H1 (cell line): ENCODE measurements at regions of chr9 and their contacts with region 1.

Region 1: DNA sequence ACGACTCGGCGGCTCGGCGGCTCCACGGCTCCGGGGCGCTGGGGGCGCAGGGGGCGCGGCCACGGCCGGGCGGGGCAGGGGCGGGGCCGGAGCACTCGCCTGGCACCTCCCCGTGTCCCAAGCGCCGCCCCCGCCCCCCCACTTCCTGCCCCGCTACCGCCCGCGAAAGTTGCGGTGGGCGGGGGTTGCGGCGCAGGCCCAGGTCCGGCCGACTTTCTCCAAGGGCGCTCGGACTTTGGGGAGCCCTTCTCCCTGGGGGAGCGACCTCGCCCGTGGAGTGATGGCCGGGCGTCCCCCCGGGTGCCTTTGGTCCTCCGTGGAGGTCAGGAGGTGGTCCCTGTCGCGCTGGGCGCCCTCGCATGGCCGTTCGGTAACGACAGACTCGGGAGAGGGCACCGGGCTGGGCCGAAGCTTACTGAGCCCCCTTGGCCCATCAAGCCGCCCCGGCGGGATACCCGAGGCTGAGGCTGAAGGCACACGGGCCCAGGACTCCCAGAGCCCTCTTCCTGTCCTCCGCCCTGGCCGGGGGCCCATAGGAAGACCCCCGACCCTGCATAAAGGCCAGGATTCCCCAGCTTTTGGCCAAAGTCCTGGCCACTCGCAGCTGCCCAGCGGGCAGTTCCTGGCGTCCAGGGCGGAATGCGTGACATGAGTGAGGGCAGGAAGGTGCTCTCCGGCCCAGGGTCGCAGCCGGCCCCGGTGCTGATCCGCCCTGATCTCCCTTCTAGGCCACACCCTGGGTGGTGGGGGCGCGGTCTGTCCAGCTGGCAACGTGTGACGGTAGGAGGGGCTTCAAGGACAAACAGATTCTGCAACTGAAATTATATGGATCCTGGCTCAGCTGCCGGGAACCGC is 883 bp upstream of the VAV2 start:
- DNase-seq: peak; percentile 39 to 84
- H3K4me3 ChIP-seq: peak overlapping the region; percentile 40 to 93 (median 67)
- H3K27ac ChIP-seq: peak overlapping the region; percentile 54; the same call in 1 of the 2 replicates
- H3K4me1 ChIP-seq: peaks cover 0 to 20% (median 11%) of the 10 kb centered on the region in 4 experiments; a peak in 5 of 7 replicates
- H3K27me3 ChIP-seq: no peaks in the 10 kb centered on the region
- CTCF ChIP-seq: peak in 2 of 3 experiments; percentile 12 to 22; a peak in 2 of 4 replicates
- EP300 ChIP-seq: no peak
- POLR2A ChIP-seq: no peak
- RAD21 ChIP-seq: 0 out of 4 replicates have a peak, but pooled peaks of 1 of the 2 experiments have one; percentile 10

Region 2: GRCh38 chr9:133773889-133774655 is 218.9 kb before region 1 on chr9:
- CTCF ChIA-PET with region 1: interaction called, 30 read pairs
- POLR2A ChIA-PET with region 1: no interaction called
- DNase-seq: no peak
- H3K4me3 ChIP-seq: no peak overlapping the region
- H3K27ac ChIP-seq: no peak overlapping the region
- H3K4me1 ChIP-seq: no peaks in the 10 kb centered on the region
- H3K27me3 ChIP-seq: no peaks in the 10 kb centered on the region
- CTCF ChIP-seq: no peak
- EP300 ChIP-seq: no peak
- POLR2A ChIP-seq: no peak
- RAD21 ChIP-seq: no peak

Region 3: DNA sequence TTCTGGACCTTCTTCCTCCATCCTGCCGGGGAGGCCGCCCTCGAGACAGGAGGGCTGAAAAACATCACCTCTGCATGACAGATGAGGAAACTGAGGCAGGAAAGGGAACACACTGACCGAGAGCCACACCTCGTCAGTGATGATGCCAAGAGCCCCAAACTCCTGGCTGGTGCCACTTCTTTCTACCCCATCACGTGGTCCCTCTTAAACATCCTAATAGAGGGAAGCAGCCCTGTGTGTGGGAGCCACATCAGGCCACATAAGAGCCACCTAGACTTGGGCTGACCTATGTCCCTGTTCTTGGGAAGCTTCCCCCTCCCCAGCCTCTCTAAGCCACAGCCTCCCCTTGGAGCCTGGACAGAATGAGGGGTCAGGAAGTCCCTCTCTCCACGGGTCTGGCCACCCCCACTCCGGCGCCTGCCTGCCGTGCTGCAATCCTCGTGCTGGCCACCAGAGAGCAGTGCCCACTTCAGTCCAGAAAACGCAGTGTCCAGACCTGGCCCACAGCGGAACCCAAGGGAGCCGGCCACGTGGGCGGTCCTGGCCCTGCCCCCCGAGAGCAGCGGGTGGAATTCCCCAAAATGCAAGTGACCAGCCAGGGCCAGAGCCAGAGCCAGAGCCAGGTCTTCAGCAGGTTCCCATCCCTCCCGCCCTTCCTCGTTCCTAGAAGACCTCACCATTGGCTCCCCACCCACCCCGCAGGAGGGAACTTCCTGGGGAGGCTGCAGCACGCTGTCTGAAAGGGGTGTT is 200.1 kb before region 1 on chr9:
- CTCF ChIA-PET with region 1: interaction called, 42 read pairs
- POLR2A ChIA-PET with region 1: no interaction called
- DNase-seq: peak in 1 of 2 experiments; percentile 90
- H3K4me3 ChIP-seq: no peak overlapping the region
- H3K27ac ChIP-seq: no peak overlapping the region
- H3K4me1 ChIP-seq: peaks cover 0 to 9% (median 3%) of the 10 kb centered on the region in 4 experiments; a peak in 6 of 7 replicates
- H3K27me3 ChIP-seq: no peaks in the 10 kb centered on the region
- CTCF ChIP-seq: peak in 2 of 3 experiments; percentile 90 to 92; a peak in 3 of 4 replicates
- EP300 ChIP-seq: no peak
- POLR2A ChIP-seq: no peak
- RAD21 ChIP-seq: peak; percentile 88 to 91

Region 4: DNA sequence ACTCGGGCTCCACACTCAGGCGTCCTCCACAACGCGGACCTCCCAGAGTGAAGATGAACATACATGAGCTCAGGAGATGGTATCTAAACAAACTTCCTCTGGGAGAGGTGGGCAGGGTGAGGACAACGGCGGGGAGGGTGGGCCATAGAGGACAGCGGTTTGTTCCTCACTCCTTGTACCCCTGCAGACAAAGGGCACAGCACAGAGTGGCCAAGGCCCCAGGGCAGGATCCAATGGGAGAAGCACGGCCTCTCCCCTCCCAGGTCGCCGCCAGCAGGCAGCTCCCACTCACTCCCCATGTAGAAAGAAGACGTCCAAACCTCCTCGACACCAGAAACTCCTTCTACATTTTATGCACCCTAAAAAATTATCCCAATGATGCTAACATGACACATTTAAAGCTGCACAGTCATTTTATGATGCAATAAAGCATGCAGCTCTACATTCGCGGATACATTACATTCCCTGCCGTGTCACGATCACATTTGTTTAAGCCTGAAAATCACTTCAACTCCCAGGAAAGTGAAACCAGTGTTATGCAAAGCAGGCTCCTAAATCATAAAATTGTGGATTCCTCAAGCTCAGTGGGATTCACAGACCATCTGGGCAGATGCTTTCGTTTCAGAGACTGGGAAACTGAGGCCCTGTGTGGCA is 167.3 kb before region 1 on chr9:
- CTCF ChIA-PET with region 1: interaction called, 11 read pairs
- POLR2A ChIA-PET with region 1: no interaction called
- DNase-seq: no peak
- H3K4me3 ChIP-seq: no peak overlapping the region
- H3K27ac ChIP-seq: no peak overlapping the region
- H3K4me1 ChIP-seq: peaks cover 0 to 35% (median 29%) of the 10 kb centered on the region in 4 experiments; a peak in 6 of 7 replicates
- H3K27me3 ChIP-seq: no peaks in the 10 kb centered on the region
- CTCF ChIP-seq: no peak
- EP300 ChIP-seq: no peak
- POLR2A ChIP-seq: no peak
- RAD21 ChIP-seq: no peak

Region 5: DNA sequence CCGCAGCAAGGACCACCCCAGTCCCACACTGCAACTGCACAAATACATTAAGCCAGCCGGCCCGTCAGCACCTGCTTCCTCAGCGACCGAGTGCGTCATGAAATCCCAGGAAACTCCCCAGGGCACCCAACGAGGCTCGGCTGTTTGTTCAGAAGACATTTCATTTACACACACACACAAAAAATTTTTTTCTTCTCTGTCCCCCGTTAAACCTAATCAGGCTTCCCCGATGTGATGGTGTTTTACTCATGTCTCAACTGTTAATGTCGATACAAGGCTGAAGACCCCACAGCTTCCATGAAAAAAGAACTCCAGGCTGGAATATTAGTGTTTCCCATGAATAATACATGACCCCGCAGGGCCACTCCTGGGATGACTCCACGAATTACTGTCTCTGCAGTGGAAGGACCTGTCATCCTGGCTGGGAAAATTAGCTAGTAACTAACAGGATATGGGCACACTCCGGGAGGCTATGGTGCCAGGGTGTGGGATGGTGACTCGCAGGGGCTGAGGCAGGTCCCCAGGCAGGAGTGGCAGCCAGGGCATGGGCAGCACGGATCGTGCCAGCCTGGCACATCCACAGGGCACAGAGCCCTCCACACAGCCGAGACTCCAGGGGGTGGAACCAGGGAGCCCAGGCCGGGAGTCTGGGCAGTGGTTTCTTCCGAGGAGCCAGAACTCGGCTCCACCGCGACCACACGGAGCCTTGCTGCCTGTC is 103.3 kb before region 1 on chr9:
- CTCF ChIA-PET with region 1: interaction called, 20 read pairs
- POLR2A ChIA-PET with region 1: interaction called, 4 read pairs
- DNase-seq: peak in 1 of 2 experiments; percentile 43
- H3K4me3 ChIP-seq: no peak overlapping the region
- H3K27ac ChIP-seq: no peak overlapping the region
- H3K4me1 ChIP-seq: peaks cover 0 to 50% (median 22%) of the 10 kb centered on the region in 4 experiments; a peak in 6 of 7 replicates
- H3K27me3 ChIP-seq: no peaks in the 10 kb centered on the region
- CTCF ChIP-seq: no peak
- EP300 ChIP-seq: no peak
- POLR2A ChIP-seq: no peak
- RAD21 ChIP-seq: no peak

Region 6: GRCh38 chr9:133979273-133979920 is 13.6 kb before region 1 on chr9:
- CTCF ChIA-PET with region 1: interaction called, 22 read pairs
- POLR2A ChIA-PET with region 1: interaction called, 5 read pairs
- DNase-seq: peak in 1 of 2 experiments; percentile 50
- H3K4me3 ChIP-seq: no peak overlapping the region
- H3K27ac ChIP-seq: no peak overlapping the region
- H3K4me1 ChIP-seq: peaks cover 0 to 16% (median 4%) of the 10 kb centered on the region in 4 experiments; a peak in 5 of 7 replicates
- H3K27me3 ChIP-seq: no peaks in the 10 kb centered on the region
- CTCF ChIP-seq: no peak
- EP300 ChIP-seq: no peak
- POLR2A ChIP-seq: no peak
- RAD21 ChIP-seq: no peak